Vagina (tissue), 2 donors: ENCODE measurements at regions of chr17 and their contacts with region 1.

Region 1: DNA sequence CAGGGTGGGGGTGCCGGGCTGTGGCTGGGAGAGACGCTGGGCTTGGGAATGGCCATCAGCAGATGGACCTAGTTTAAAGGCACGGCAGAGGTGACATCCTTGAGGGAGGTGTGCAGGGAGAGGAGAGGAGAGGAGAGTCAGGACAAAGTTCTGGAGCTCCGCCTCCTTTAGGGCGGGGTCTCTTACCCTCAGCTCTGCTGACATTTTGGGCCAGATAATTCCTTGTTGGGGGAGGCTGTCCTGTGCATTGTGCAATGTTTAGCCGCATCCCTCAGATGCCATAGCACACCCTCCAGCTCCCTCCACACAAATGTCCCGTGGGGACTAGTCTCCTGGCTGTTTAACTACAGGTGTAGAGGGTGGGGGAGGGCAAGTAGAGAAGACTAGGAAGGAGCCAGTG is 48.3 kb downstream of the ARHGAP23 start:
- DNase-seq: no peak
- H3K4me3 ChIP-seq: no peak overlapping the region
- H3K27ac ChIP-seq: no peak overlapping the region
- H3K4me1 ChIP-seq: peaks cover 8% of the 10 kb centered on the region
- H3K27me3 ChIP-seq: no peaks in the 10 kb centered on the region
- CTCF ChIP-seq: no peak
- POLR2A ChIP-seq: no peak

Region 2: DNA sequence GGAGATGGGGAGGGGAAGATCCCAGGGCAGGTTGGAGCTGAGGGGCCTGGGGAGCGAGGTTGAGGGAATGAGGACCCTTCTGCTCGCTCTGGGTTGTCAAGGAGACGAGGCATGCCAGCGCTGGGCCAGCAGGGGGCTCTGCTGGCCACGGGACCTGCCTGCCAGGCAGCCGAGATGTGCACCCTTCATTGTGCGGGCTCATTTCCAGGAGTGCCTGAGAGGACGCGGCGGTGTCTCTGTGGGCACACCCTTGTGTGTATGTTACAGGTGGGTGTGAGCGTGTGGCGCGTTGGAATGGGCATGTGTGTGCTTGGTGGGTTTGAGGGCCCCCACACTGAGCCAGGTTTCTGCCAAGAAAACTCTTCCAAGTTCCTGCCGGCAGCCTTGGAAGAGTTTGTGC is 32.4 kb before region 1 on chr17:
- intact Hi-C with region 1: loop called (anchors 5 kb)
- DNase-seq: no peak
- H3K4me3 ChIP-seq: no peak overlapping the region
- H3K27ac ChIP-seq: no peak overlapping the region
- H3K4me1 ChIP-seq: peaks cover 54% of the 10 kb centered on the region
- H3K27me3 ChIP-seq: no peaks in the 10 kb centered on the region
- CTCF ChIP-seq: peak; percentile 88 to 95 (median 93)
- POLR2A ChIP-seq: no peak

Region 3: GRCh38 chr17:38533866-38534497 is 57.4 kb after region 1 on chr17:
- intact Hi-C with region 1: no loop called
- DNase-seq: no peak
- H3K4me3 ChIP-seq: no peak overlapping the region
- H3K27ac ChIP-seq: no peak overlapping the region
- H3K4me1 ChIP-seq: no peaks in the 10 kb centered on the region
- H3K27me3 ChIP-seq: no peaks in the 10 kb centered on the region
- CTCF ChIP-seq: no peak
- POLR2A ChIP-seq: no peak